Vagina (tissue), 2 donors: ENCODE measurements at regions of chr9 and their contacts with region 1.

Region 1: GRCh38 chr9:34493972-34494535 is 28.7 kb downstream of the ENHO start:
- DNase-seq: no peak
- H3K4me3 ChIP-seq: no peak overlapping the region
- H3K27ac ChIP-seq: no peak overlapping the region
- H3K4me1 ChIP-seq: no peaks in the 10 kb centered on the region
- H3K27me3 ChIP-seq: no peaks in the 10 kb centered on the region
- CTCF ChIP-seq: no peak
- POLR2A ChIP-seq: no peak

Region 2: DNA sequence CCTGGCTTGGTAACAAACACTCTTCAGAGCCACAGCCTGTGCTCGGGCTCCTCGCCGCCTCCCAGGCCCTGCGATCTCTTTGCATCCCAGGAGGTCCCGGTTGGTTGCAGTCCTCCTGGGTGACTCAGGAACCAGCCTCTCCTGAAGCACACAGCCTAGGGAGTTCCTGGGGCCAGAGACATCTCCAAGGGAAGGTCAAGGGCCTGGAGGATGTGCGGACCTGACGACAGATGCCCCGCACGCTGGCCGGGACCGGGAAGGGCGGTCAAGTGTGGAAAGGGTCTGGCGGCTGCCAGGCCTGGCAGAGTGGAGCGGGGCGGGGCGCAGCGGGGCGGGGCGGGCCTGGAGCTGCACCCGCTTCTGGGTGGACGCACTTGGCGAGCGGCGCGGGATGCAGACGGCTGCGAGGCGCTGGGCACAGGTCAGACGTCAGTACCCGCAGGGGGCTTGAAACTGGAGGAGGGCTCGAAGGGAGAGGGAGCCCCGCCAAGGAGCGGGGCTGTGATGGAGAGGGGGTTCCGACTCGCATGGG is 743.7 kb before region 1 on chr9:
- intact Hi-C with region 1: loop called (anchors 5 kb)
- DNase-seq: no peak
- H3K4me3 ChIP-seq: peak overlapping the region; percentile 30 to 38
- H3K27ac ChIP-seq: no peak overlapping the region
- H3K4me1 ChIP-seq: peaks cover 13% of the 10 kb centered on the region
- H3K27me3 ChIP-seq: no peaks in the 10 kb centered on the region
- CTCF ChIP-seq: no peak
- POLR2A ChIP-seq: no peak

Region 3: DNA sequence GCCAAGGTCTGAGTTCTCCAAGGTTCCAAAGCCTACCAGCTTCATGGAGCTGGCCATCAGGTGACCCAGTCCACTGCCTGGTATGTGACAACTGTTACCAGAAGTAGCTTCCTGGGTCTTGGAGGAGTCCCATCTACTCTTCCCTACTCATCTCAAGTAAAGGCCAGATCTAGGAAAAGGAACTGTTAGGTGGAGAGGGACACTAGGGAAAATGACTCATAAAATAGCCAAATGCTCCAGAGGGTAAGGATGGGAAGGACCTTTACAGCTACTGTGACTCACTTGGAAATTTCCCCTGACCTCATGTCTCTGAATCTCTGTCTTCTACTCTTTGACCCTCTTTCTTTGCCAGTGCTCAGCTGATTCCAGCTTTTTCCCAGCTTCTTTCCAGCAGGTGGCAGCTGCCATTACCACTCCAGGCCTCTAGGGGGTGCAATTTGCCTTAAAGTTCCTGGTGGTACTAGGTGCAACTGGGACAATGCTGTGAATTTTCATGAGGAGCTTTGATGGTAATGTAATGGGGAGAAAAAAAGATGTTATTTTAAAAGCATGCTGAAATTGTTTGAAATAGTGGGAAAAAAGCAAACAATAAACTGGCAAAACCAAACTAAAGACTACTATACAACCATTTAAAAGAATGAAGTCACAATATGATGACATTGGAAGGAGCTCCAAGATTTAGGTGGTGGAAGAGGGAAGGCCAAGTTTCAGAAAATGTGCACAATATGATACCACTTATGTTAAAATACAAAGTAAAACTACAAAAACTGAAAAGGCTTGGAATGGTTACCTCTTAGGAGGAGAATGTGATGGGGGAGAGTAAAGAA is 90.3 kb before region 1 on chr9:
- intact Hi-C with region 1: loop called (anchors 10 kb)
- DNase-seq: no peak
- H3K4me3 ChIP-seq: no peak overlapping the region
- H3K27ac ChIP-seq: no peak overlapping the region
- H3K4me1 ChIP-seq: no peaks in the 10 kb centered on the region
- H3K27me3 ChIP-seq: no peaks in the 10 kb centered on the region
- CTCF ChIP-seq: peak; percentile 87 to 94 (median 91)
- POLR2A ChIP-seq: no peak

Region 4: GRCh38 chr9:34463098-34463900 is 30.8 kb before region 1 on chr9:
- intact Hi-C with region 1: loop called (anchors 1 kb)
- DNase-seq: no peak
- H3K4me3 ChIP-seq: no peak overlapping the region
- H3K27ac ChIP-seq: no peak overlapping the region
- H3K4me1 ChIP-seq: peaks cover 8% of the 10 kb centered on the region
- H3K27me3 ChIP-seq: no peaks in the 10 kb centered on the region
- CTCF ChIP-seq: no peak
- POLR2A ChIP-seq: no peak

Region 5: GRCh38 chr9:34559624-34560452 is 65.8 kb after region 1 on chr9:
- intact Hi-C with region 1: no loop called
- DNase-seq: no peak
- H3K4me3 ChIP-seq: peak overlapping the region in 1 of 2 donors; percentile 31
- H3K27ac ChIP-seq: peak overlapping the region; percentile 66
- H3K4me1 ChIP-seq: peaks cover 30% of the 10 kb centered on the region
- H3K27me3 ChIP-seq: no peaks in the 10 kb centered on the region
- CTCF ChIP-seq: no peak
- POLR2A ChIP-seq: peak in 1 of 2 donors; percentile 15